Endothelial cell of umbilical vein (primary cell): ENCODE measurements at regions of chr4 and their contacts with region 1.

Region 1: DNA sequence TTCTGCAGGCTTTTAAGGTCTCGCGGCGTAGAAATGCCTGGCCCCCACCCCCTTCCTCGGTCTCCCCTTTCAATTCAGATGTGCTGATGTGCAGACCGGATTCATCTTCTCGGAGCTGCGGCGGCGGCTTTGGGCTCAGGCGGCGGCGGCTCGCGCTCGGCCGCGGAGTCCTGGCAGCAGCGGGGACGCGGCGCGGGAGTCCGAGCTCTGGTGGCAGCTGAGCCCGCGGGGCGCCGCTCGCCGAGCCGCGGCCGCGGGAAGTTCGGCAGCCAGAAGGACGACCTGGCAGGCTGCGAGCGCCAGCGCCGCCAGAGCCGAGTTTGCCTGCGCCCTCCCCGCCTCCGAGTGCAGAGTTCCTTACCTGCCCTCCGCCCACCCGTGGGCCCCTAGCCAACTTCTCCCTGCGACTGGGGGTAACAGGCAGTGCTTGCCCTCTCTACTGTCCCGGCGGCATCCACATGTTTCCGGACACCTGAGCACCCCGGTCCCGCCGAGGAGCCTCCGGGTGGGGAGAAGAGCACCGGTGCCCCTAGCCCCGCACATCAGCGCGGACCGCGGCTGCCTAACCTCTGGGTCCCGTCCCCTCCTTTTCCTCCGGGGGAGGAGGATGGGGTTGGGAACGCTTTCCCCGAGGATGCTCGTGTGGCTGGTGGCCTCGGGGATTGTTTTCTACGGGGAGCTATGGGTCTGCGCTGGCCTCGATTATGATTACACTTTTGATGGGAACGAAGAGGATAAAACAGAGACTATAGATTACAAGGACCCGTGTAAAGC is 448 bp downstream of the TLL1 start:
- DNase-seq: no peak
- H3K4me3 ChIP-seq: peak overlapping the region; percentile 45 to 65 (median 58)
- H3K27ac ChIP-seq: peak overlapping the region; percentile 19
- H3K4me1 ChIP-seq: peaks cover 22% of the 10 kb centered on the region
- H3K27me3 ChIP-seq: peaks cover 0 to 2% of the 10 kb centered on the region in 2 experiments
- CTCF ChIP-seq: no peak
- POLR2A ChIP-seq: no peak

Region 2: GRCh38 chr4:165556383-165556782 is 317.1 kb before region 1 on chr4:
- CTCF ChIA-PET with region 1: no interaction called
- POLR2A ChIA-PET with region 1: no interaction called
- dilution Hi-C with region 1: no loop called
- intact Hi-C with region 1: loop called (anchors 5 kb)
- DNase-seq: peak; percentile 31
- H3K4me3 ChIP-seq: no peak overlapping the region
- H3K27ac ChIP-seq: no peak overlapping the region
- H3K4me1 ChIP-seq: peaks cover 15% of the 10 kb centered on the region
- H3K27me3 ChIP-seq: no peaks in the 10 kb centered on the region
- CTCF ChIP-seq: no peak
- POLR2A ChIP-seq: no peak

Region 3: GRCh38 chr4:165765053-165765452 is 108.4 kb before region 1 on chr4:
- CTCF ChIA-PET with region 1: interaction called, 4 read pairs
- POLR2A ChIA-PET with region 1: no interaction called
- dilution Hi-C with region 1: no loop called
- intact Hi-C with region 1: loop called (anchors 10 kb)
- DNase-seq: peak; percentile 30
- H3K4me3 ChIP-seq: no peak overlapping the region
- H3K27ac ChIP-seq: no peak overlapping the region
- H3K4me1 ChIP-seq: peaks cover 39% of the 10 kb centered on the region
- H3K27me3 ChIP-seq: no peaks in the 10 kb centered on the region
- CTCF ChIP-seq: no peak
- POLR2A ChIP-seq: no peak

Region 4: DNA sequence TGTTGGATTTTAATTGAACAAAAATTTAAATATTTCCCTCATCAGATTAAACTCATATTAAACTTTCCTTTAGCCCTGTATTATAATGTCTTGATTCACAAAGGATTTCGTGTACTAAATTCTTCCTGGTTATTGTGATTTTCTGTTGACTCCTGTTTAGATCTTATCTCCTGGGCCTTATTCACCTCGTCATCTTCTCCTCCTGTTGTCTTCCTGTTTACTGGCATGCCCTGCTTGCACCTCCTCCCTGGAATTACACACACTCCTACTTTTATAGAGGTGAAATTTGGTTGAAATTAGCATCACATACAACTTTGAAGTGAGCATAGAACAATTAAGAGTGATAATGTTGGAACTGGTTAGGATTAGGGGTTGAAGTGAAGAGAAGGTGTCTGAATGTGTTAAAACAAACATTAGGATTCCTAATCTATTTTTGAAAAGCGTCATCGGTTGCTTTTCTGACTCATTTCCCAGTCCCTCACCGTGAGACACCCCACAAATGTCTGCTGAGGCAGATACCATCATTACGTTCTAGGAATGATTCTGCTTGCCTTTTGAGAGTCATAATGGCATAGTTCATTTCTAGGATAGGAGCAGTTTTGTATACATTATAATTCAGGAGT is 32.0 kb after region 1 on chr4:
- CTCF ChIA-PET with region 1: interaction called, 3 read pairs
- POLR2A ChIA-PET with region 1: no interaction called
- dilution Hi-C with region 1: no loop called
- intact Hi-C with region 1: loop called (anchors 2 kb)
- DNase-seq: peak; percentile 63
- H3K4me3 ChIP-seq: peak overlapping the region in 1 of 3 experiments; percentile 9
- H3K27ac ChIP-seq: peak overlapping the region; percentile 82
- H3K4me1 ChIP-seq: peaks cover 18% of the 10 kb centered on the region
- H3K27me3 ChIP-seq: no peaks in the 10 kb centered on the region
- CTCF ChIP-seq: no peak
- POLR2A ChIP-seq: no peak